Caco-2 (cell line): ENCODE measurements at regions of chr6 and their contacts with region 1.

Region 1: DNA sequence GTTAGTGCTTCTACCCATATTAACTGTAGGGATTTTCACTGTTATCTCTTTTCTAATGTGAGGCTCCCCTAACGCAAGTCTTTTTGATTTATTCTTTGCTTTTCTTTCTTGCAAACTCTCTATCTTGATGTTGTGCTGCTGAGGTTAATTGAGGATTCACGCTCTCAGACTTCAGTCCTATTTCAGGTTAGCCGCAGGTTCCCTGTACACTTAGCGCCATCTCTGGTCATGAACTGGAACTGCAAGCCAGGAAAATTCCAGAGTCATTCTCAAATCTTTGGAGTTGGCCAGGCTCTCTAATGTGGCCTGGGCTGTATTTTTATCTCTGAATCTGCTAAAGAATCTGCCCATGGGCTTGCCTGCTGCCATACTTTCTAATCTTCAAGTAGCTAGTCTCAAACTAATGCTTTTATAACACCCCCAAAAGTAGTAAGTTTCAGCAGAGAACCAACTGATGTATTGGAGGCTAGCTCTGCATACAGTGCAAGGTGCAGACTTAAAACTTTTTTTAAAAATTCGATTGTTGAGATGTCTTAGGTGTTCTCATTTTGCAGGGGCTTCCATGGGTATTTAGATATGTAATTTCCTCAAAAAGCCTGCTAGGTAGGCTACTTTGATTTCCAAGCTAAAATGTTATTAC is 91.1 kb upstream of the OPRM1 start:
- DNase-seq: peak in 1 of 2 experiments; percentile 55
- H3K4me3 ChIP-seq: no peak overlapping the region
- H3K4me3 Mint-ChIP-seq: no peak overlapping the region
- H3K27ac Mint-ChIP-seq: no peak overlapping the region
- H3K4me1 ChIP-seq: peaks cover 16% of the 10 kb centered on the region; the same call in 1 of the 2 replicates
- H3K4me1 Mint-ChIP-seq: no peaks in the 10 kb centered on the region
- H3K27me3 ChIP-seq: no peaks in the 10 kb centered on the region
- H3K27me3 Mint-ChIP-seq: peaks cover 3% of the 10 kb centered on the region
- CTCF ChIP-seq: peak; percentile 90 to 92

Region 2: DNA sequence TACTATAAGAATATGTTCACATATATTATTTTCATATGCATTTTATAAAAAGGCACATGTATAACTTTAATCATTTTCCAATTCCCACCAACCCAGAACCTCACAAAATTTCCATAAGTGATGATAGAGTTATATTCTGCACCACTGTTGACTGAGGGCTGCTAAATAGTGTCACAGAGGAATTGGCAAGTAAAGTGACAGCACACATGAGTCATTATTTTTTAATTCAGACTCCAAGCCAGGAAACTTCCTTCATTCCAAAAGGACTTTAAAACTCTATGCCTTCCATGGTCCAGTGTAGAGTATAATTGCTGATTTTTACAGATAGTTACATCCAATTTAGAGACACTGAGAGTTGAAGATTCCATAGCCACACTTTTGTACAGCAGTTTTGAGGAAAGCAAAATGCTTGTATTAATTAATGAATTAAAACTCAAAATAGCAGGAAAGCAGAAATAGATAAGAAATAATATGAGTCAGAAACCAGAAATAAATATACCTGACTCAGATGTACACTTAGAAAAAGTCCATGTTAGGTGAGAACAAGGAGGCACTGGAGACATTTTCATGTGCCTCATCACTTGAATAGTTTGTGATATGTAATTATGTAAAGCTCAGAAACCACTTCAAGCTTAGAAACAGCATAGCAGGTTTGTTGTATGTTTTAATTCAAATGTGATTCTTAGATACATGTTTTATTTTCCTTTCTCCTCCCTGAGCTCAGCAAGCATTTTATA is 334.0 kb before region 1 on chr6:
- CTCF ChIA-PET with region 1: no interaction called
- POLR2A ChIA-PET with region 1: no interaction called
- intact Hi-C with region 1: no loop called
- DNase-seq: no peak
- H3K4me3 ChIP-seq: no peak overlapping the region
- H3K4me3 Mint-ChIP-seq: no peak overlapping the region
- H3K27ac Mint-ChIP-seq: no peak overlapping the region
- H3K4me1 ChIP-seq: no peaks in the 10 kb centered on the region
- H3K4me1 Mint-ChIP-seq: no peaks in the 10 kb centered on the region
- H3K27me3 ChIP-seq: no peaks in the 10 kb centered on the region
- H3K27me3 Mint-ChIP-seq: peaks cover 2% of the 10 kb centered on the region
- CTCF ChIP-seq: no peak

Region 3: GRCh38 chr6:153662982-153663381 is 284.9 kb before region 1 on chr6:
- CTCF ChIA-PET with region 1: no interaction called
- POLR2A ChIA-PET with region 1: no interaction called
- intact Hi-C with region 1: loop called (anchors 5 kb)
- DNase-seq: no peak
- H3K4me3 ChIP-seq: no peak overlapping the region
- H3K4me3 Mint-ChIP-seq: no peak overlapping the region
- H3K27ac Mint-ChIP-seq: no peak overlapping the region
- H3K4me1 ChIP-seq: no peaks in the 10 kb centered on the region
- H3K4me1 Mint-ChIP-seq: no peaks in the 10 kb centered on the region
- H3K27me3 ChIP-seq: no peaks in the 10 kb centered on the region
- H3K27me3 Mint-ChIP-seq: no peaks in the 10 kb centered on the region
- CTCF ChIP-seq: no peak

Region 4: GRCh38 chr6:153727885-153728284 is 220.0 kb before region 1 on chr6:
- CTCF ChIA-PET with region 1: interaction called, 3 read pairs
- POLR2A ChIA-PET with region 1: no interaction called
- intact Hi-C with region 1: loop called (anchors 10 kb)
- DNase-seq: no peak
- H3K4me3 ChIP-seq: no peak overlapping the region
- H3K4me3 Mint-ChIP-seq: no peak overlapping the region
- H3K27ac Mint-ChIP-seq: no peak overlapping the region
- H3K4me1 ChIP-seq: no peaks in the 10 kb centered on the region
- H3K4me1 Mint-ChIP-seq: no peaks in the 10 kb centered on the region
- H3K27me3 ChIP-seq: no peaks in the 10 kb centered on the region
- H3K27me3 Mint-ChIP-seq: peaks cover 2% of the 10 kb centered on the region
- CTCF ChIP-seq: no peak

Region 5: GRCh38 chr6:153804755-153805330 is 143.1 kb before region 1 on chr6:
- CTCF ChIA-PET with region 1: no interaction called
- POLR2A ChIA-PET with region 1: no interaction called
- intact Hi-C with region 1: loop called (anchors 5 kb)
- DNase-seq: no peak
- H3K4me3 ChIP-seq: no peak overlapping the region
- H3K4me3 Mint-ChIP-seq: no peak overlapping the region
- H3K27ac Mint-ChIP-seq: no peak overlapping the region
- H3K4me1 ChIP-seq: no peaks in the 10 kb centered on the region
- H3K4me1 Mint-ChIP-seq: no peaks in the 10 kb centered on the region
- H3K27me3 ChIP-seq: no peaks in the 10 kb centered on the region
- H3K27me3 Mint-ChIP-seq: no peaks in the 10 kb centered on the region
- CTCF ChIP-seq: no peak